ENCODE measurements at regions of chr7 and their contacts with region 1.

Region 1: DNA sequence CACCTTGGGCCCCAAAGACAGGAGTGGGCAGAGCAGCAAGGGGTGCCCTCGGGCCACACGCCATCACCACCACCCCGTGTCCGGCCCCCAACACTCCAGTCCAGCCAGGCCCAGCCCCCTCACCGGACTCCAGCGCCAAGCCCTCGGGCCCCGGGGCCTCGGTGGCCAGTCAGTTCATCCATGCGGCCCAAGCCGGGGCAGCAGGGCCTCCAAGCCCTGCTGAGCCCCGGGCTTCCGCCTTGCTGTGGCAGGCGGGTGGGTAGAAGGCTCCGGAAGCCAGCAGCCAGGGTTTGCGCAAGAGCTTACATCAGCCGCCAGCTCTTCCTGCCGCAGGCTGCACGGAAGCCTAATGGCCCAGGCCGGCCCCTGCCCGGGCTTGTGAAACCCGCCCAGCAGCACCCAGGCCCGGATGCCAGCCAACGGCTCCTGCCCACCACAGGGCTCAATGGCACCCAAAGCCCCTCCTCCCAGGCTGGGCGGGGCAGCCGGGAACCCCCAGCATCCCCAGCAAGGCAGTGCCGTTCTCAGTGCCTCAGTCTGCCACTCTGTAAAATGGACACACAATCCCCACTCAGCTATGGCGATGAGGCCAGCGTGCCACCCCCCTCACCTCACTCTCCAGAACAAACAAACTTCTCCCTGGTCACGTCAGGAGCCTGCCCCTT is 26.5 kb downstream of the TNRC18 start:
- DNase-seq: peak; percentile 57
- H3K4me3 ChIP-seq: peak overlapping the region; percentile 32
- H3K27ac ChIP-seq: peak overlapping the region; percentile 61
- H3K27me3 ChIP-seq: no peaks in the 10 kb centered on the region
- CTCF ChIP-seq: no peak

Region 2: GRCh38 chr7:5425507-5426225 is 28.5 kb after region 1 on chr7:
- CTCF ChIA-PET with region 1: no interaction called
- POLR2A ChIA-PET with region 1: interaction called, 10 read pairs
- DNase-seq: peak; percentile 67
- H3K4me3 ChIP-seq: peak overlapping the region; percentile 86
- H3K27ac ChIP-seq: peak overlapping the region; percentile 97
- H3K27me3 ChIP-seq: no peaks in the 10 kb centered on the region
- CTCF ChIP-seq: no peak

Region 3: GRCh38 chr7:5445981-5446594 is 49.0 kb after region 1 on chr7:
- CTCF ChIA-PET with region 1: no interaction called
- POLR2A ChIA-PET with region 1: no interaction called
- DNase-seq: no peak
- H3K4me3 ChIP-seq: no peak overlapping the region
- H3K27ac ChIP-seq: no peak overlapping the region
- H3K27me3 ChIP-seq: no peaks in the 10 kb centered on the region
- CTCF ChIP-seq: no peak

Region 4: GRCh38 chr7:5497263-5498103 is 100.4 kb after region 1 on chr7:
- CTCF ChIA-PET with region 1: no interaction called
- POLR2A ChIA-PET with region 1: no interaction called
- DNase-seq: no peak
- H3K4me3 ChIP-seq: no peak overlapping the region
- H3K27ac ChIP-seq: no peak overlapping the region
- H3K27me3 ChIP-seq: no peaks in the 10 kb centered on the region
- CTCF ChIP-seq: no peak

Region 5: DNA sequence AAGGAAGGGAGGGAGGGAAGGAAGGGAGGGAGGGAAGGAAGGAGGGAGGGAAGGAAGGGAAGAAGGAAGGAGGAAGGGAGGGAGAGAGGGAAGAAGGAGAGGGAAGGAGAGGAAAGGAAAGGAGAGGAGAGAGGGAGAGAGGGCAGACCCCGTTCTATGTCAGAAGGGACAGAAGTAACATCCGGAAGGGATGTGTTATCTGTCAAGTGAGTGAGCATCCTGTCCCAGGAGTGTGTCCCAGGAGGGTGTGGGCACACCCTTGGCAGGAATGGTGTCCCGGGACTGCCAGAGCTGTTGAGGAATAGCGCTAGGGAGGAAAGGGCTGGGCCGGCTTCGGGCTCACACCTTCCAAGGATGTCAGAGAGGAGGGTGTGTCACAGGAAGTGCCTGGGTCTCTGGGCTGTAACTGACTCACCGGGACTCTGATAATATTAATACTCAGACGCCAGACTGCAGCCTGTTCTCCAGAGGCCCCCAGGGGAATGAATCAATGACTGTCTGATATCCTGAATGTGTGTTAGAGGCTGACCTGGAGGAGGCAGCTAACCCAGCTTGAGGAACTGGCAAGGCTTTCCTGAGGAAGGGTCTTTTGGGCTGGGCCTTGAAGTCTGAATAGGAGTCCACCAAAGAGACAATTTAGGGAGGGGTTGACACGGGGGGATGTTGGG is 152.1 kb after region 1 on chr7:
- CTCF ChIA-PET with region 1: no interaction called
- POLR2A ChIA-PET with region 1: no interaction called
- DNase-seq: no peak
- H3K4me3 ChIP-seq: no peak overlapping the region
- H3K27ac ChIP-seq: no peak overlapping the region
- H3K27me3 ChIP-seq: no peaks in the 10 kb centered on the region
- CTCF ChIP-seq: no peak

Region 6: DNA sequence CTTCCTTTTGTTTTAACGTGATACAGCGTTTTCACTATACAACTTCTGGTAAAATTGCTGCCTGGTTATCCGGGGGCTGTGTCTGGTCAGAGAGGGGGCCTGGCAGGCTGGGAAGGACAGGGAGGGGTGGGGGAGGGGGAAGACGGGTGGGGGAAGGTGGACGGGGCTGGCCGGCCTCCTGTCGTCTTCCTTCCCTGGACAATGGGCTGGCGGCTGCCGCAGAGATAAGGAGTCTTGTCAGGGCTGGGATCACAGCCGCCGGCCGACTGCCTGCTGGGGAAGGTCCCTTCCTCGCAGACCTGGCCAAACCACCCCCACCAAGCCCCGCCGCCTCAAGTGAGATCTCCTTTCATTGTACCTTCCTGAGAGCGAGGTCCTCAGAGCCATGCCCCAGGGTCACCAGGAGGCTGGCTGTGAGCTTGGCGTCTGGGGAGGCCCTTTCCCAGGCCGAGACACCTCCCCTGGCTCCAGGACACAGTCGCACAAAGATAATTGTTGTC is 177.7 kb after region 1 on chr7:
- CTCF ChIA-PET with region 1: no interaction called
- POLR2A ChIA-PET with region 1: no interaction called
- DNase-seq: no peak
- H3K4me3 ChIP-seq: no peak overlapping the region
- H3K27ac ChIP-seq: no peak overlapping the region
- H3K27me3 ChIP-seq: peaks cover 4% of the 10 kb centered on the region
- CTCF ChIP-seq: no peak